GM12878 (cell line): ENCODE measurements at regions of chr1 and their contacts with region 1.

Region 1: DNA sequence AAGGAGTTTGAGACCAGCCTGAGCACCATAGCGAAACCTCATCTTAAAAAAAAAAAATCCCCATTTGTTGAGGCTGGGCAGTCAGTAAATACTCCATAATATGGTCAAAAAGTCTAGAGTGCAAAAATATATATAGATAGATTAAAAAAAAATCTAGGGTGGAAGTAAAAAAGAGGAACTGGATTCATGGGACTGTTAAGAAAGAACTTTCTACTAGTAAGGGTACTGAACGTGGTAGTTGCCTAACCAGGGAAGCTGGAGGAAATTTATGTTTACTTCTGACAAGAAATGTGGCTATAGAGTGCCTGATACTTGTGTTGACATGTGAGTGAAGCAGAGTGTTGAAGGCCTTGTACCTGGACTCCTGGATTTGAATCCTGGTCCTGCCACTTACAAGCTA is 265.9 kb upstream of the FAM78B start:
- DNase-seq: no peak
- ATAC-seq: no peak
- H3K4me3 ChIP-seq: no peak overlapping the region
- H3K27ac ChIP-seq: no peak overlapping the region
- H3K4me1 ChIP-seq: no peaks in the 10 kb centered on the region
- H3K27me3 ChIP-seq: no peaks in the 10 kb centered on the region
- CTCF ChIP-seq: no peak
- EP300 ChIP-seq: no peak
- POLR2A ChIP-seq: no peak
- RAD21 ChIP-seq: no peak

Region 2: GRCh38 chr1:165717918-165718515 is 714.6 kb before region 1 on chr1:
- CTCF ChIA-PET with region 1: no interaction called
- POLR2A ChIA-PET with region 1: no interaction called
- RAD21 ChIA-PET with region 1: no interaction called
- SMC1A ChIA-PET with region 1: no interaction called
- in situ Hi-C with region 1: no loop called
- intact Hi-C with region 1: loop called (anchors 5 kb)
- DNase-seq: no peak
- ATAC-seq: peak; percentile 88
- H3K4me3 ChIP-seq: no peak overlapping the region
- H3K27ac ChIP-seq: no peak overlapping the region
- H3K4me1 ChIP-seq: no peaks in the 10 kb centered on the region
- H3K27me3 ChIP-seq: no peaks in the 10 kb centered on the region
- CTCF ChIP-seq: peak; percentile 73 to 84 (median 82)
- EP300 ChIP-seq: no peak
- POLR2A ChIP-seq: no peak
- RAD21 ChIP-seq: peak; percentile 99

Region 3: DNA sequence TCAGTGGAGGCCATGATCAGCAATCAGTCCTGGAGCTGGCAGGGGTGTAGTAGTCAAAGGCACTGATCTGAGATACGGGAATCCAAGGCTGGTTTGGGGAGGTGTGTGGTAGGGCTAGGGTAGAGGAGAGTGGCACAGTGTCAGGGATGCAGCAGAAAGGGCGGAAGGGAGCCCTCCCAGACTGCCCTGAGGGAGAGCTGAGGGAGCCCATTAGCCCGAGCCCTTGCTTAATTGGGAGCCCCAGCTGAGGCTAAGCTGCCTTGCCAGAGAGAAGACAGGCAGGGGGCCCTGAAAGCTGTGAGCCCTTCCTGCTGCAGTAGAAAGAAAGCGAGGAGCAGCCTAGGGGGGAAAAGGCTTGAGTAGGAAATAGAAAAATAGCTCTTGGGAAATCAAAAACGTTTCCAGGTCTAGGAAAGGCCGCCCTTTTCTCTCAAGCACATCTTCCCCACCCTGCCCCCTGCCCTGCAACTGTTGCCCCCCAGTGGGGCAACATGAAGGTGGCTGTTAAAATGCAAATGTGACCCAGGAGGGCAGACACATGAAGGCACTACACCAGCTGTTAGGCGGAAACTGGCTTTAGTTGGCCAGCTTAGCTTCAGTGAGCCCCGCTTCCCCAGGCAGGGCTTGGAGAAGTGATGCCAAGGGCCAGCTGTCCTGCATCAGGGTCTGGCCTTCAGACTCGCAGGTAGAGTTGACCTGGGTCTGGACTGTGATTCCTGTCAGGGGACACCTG is 499.0 kb before region 1 on chr1:
- CTCF ChIA-PET with region 1: interaction called, 15 read pairs
- POLR2A ChIA-PET with region 1: no interaction called
- RAD21 ChIA-PET with region 1: interaction called, 4 read pairs
- SMC1A ChIA-PET with region 1: interaction called, 5 read pairs
- in situ Hi-C with region 1: loop called (anchors 5 kb)
- intact Hi-C with region 1: loop called (anchors 1 kb)
- DNase-seq: no peak
- ATAC-seq: peak; percentile 30; the same call in 2 of the 3 replicates
- H3K4me3 ChIP-seq: no peak overlapping the region
- H3K27ac ChIP-seq: no peak overlapping the region
- H3K4me1 ChIP-seq: no peaks in the 10 kb centered on the region
- H3K27me3 ChIP-seq: no peaks in the 10 kb centered on the region
- CTCF ChIP-seq: no peak
- EP300 ChIP-seq: no peak
- POLR2A ChIP-seq: no peak
- RAD21 ChIP-seq: no peak

Region 4: DNA sequence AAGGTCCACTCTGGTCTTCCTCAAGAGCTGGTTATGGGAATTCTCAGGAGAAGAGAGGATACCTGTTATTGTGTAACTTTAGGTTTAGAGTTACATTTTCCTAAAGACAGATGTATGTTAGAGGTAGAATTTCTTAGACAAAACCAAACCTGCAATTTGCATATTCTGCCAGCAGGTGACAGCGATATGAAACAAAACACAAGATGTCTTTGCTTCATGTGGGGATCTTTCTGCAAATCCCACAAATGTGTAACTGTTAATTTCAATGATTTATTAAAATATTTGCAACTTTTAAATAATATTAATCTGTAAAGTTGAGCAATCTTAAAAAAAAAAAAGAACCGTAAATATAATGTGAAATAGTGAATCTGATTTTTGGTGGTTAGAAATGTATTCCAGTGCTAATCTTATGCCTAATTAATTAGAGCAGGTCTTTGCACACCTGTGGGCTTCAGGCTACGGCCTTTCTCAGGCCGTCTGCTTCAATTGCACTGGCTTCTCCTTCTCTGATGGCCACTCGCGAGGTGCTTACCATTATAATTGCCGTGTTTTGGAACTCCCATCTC is 299.3 kb before region 1 on chr1:
- CTCF ChIA-PET with region 1: interaction called, 4 read pairs
- POLR2A ChIA-PET with region 1: no interaction called
- RAD21 ChIA-PET with region 1: no interaction called
- SMC1A ChIA-PET with region 1: interaction called, 4 read pairs
- in situ Hi-C with region 1: no loop called
- intact Hi-C with region 1: loop called (anchors 1 kb)
- DNase-seq: no peak
- ATAC-seq: peak; percentile 60; the same call in 2 of the 3 replicates
- H3K4me3 ChIP-seq: no peak overlapping the region
- H3K27ac ChIP-seq: no peak overlapping the region
- H3K4me1 ChIP-seq: no peaks in the 10 kb centered on the region
- H3K27me3 ChIP-seq: no peaks in the 10 kb centered on the region
- CTCF ChIP-seq: peak; percentile 34 to 53 (median 52)
- EP300 ChIP-seq: no peak
- POLR2A ChIP-seq: no peak
- RAD21 ChIP-seq: peak; percentile 43

Region 5: GRCh38 chr1:166627558-166627957 is 194.9 kb after region 1 on chr1:
- CTCF ChIA-PET with region 1: no interaction called
- POLR2A ChIA-PET with region 1: no interaction called
- RAD21 ChIA-PET with region 1: no interaction called
- SMC1A ChIA-PET with region 1: no interaction called
- in situ Hi-C with region 1: no loop called
- intact Hi-C with region 1: no loop called
- DNase-seq: no peak
- ATAC-seq: no peak
- H3K4me3 ChIP-seq: no peak overlapping the region
- H3K27ac ChIP-seq: no peak overlapping the region
- H3K4me1 ChIP-seq: no peaks in the 10 kb centered on the region
- H3K27me3 ChIP-seq: no peaks in the 10 kb centered on the region
- CTCF ChIP-seq: no peak
- EP300 ChIP-seq: no peak
- POLR2A ChIP-seq: no peak
- RAD21 ChIP-seq: no peak